ENCODE measurements at regions of chr7 and their contacts with region 1.

Region 1: GRCh38 chr7:107879400-107880035 is 11.5 kb upstream of the DLD start:
- DNase-seq: no peak
- ATAC-seq: peak; percentile 83 to 89 (median 86)
- H3K4me3 ChIP-seq: no peak overlapping the region
- H3K27ac ChIP-seq: no peak overlapping the region
- H3K4me1 ChIP-seq: no peaks in the 10 kb centered on the region
- H3K27me3 ChIP-seq: no peaks in the 10 kb centered on the region
- CTCF ChIP-seq: peak; percentile 75 to 89 (median 80)
- POLR2A ChIP-seq: no peak

Region 2: DNA sequence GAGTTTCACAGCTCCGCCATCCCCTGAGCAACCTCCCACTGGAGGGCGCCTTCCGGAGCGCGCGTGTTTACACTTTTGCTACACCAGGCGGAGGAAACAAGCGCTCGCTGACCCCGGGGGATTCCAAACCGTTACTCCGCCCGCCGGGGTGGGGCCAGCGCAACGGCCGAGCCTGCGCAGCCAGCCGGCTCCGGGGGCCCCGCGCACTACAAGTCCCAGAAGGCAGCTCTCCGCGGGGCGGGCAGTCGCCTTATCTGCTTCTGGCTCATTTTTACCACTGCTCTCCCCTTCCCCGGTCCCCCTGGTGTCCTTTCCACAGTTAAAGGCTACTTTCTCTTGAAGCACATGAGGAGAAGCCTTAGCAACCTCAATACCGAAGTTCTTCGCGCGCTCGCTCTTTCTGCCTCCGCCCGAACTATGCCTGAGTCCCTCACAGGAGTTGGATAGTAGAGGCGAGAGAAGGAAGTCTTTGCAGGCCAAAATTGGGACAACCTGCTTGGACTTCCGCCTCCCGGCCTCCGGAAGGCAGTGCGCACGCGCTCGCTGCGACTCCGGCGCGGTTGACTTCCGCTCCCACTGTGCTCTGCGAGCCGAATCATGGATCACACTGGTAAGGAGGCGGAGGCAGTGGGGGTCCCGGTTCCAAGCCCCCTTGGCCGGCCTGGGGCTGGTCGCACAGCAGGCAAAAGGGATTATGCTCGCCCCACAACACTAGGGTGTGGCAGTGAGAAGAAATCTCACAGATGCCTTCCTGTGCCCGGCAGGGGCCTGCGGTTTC is 135.8 kb before region 1 on chr7 and contains the start of gene CBLL1:
- intact Hi-C with region 1: loop called (anchors 10 kb)
- DNase-seq: peak; percentile 98 to 99 (median 98)
- ATAC-seq: peak; percentile 95 to 98 (median 96)
- H3K4me3 ChIP-seq: peak within 1 kb of the TSS; percentile 72 to 92 (median 84)
- H3K27ac ChIP-seq: peak within 1 kb of the TSS; percentile 89 to 93 (median 91)
- H3K4me1 ChIP-seq: peaks cover 0 to 21% (median 5%) of the 10 kb centered on the region in 4 donors
- H3K27me3 ChIP-seq: no peaks in the 10 kb centered on the region
- CTCF ChIP-seq: peak; percentile 72 to 84 (median 80)
- POLR2A ChIP-seq: peak; percentile 76
- total RNA-seq, gene CBLL1: 5.8 to 11.6 (median 8.5) TPM

Region 3: GRCh38 chr7:108156897-108157602 is 277.5 kb after region 1 on chr7:
- intact Hi-C with region 1: no loop called
- DNase-seq: no peak
- ATAC-seq: no peak
- H3K4me3 ChIP-seq: no peak overlapping the region
- H3K27ac ChIP-seq: no peak overlapping the region
- H3K4me1 ChIP-seq: no peaks in the 10 kb centered on the region
- H3K27me3 ChIP-seq: no peaks in the 10 kb centered on the region
- CTCF ChIP-seq: no peak
- POLR2A ChIP-seq: no peak

Measured in right lobe of liver (tissue), 6 donors.